Naive thymus-derived CD4-positive, alpha-beta T cell (primary cell): ENCODE measurements at regions of chr4 and their contacts with region 1.

Region 1: GRCh38 chr4:152454398-152455011 is 81.4 kb downstream of the FBXW7 start:
- DNase-seq: peak in 2 of 9 donors; percentile 6 to 7
- ATAC-seq: no peak
- H3K4me3 ChIP-seq: no peak overlapping the region
- H3K4me3 Mint-ChIP-seq: no peak overlapping the region
- H3K27ac ChIP-seq: no peak overlapping the region
- H3K27ac Mint-ChIP-seq: no peak overlapping the region
- H3K4me1 ChIP-seq: peaks cover 5 to 9% of the 10 kb centered on the region in 2 donors
- H3K4me1 Mint-ChIP-seq: peaks cover 30 to 53% (median 41%) of the 10 kb centered on the region in 7 donors
- H3K27me3 ChIP-seq: no peaks in the 10 kb centered on the region
- H3K27me3 Mint-ChIP-seq: no peaks in the 10 kb centered on the region

Region 2: DNA sequence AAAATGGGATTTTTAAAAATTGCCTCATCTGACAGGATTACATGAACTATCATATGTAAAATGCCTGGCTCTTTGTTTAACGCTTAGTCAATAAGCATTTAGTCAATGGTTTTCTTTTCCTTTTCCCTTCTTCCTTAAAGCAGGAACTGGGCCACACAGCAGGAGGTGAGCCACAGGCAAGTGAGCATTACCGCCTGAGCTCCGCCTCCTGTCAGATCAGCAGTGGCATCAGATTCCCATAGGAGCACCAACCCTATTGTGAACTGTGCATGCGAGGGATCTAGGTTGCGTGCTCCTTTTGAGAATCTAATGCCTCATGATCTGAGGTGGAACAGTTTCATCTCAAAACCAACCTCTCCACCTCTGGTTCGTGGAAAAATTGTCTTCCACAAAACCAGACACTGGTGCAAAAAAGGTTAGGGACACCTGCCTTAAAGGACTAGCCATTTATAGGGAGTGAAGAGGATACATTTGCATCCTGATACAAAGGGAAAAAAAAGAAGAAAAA is 224.7 kb before region 1 on chr4:
- CTCF ChIA-PET with region 1: no interaction called
- POLR2A ChIA-PET with region 1: no interaction called
- intact Hi-C with region 1: no loop called
- DNase-seq: no peak
- ATAC-seq: no peak
- H3K4me3 ChIP-seq: no peak overlapping the region
- H3K4me3 Mint-ChIP-seq: no peak overlapping the region
- H3K27ac ChIP-seq: no peak overlapping the region
- H3K27ac Mint-ChIP-seq: no peak overlapping the region
- H3K4me1 ChIP-seq: no peaks in the 10 kb centered on the region
- H3K4me1 Mint-ChIP-seq: peaks cover 0 to 12% (median 9%) of the 10 kb centered on the region in 7 donors
- H3K27me3 ChIP-seq: no peaks in the 10 kb centered on the region
- H3K27me3 Mint-ChIP-seq: no peaks in the 10 kb centered on the region

Region 3: DNA sequence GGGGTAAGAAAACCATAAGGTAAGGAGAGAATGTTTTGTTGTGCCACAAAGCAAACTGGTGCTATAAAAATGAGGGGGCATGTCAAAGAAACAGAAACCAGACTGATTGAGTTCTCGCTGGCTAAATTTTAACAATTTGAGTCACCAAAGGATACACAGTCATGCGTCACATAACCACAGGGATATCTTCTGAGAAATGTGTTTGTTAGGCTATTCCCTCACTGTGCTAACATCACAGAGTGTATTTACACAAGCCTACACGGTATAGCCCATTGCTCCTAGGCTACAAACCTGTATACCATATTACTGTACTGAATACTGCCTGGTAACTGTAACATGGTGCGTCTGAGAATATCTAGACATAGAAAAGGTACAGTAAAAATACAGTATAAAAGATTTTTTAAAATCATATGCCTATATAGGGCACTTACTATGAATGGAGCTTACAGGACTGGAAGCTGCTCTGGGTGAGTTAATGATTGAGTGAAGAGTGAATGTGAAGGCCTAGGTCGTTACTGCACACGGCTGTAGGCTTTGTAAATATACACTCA is 31.3 kb after region 1 on chr4:
- CTCF ChIA-PET with region 1: interaction called, 5 read pairs
- POLR2A ChIA-PET with region 1: no interaction called
- intact Hi-C with region 1: loop called (anchors 1 to 5 kb)
- DNase-seq: peak in 7 of 9 donors; percentile 10 to 49 (median 35)
- ATAC-seq: peak; percentile 97
- H3K4me3 ChIP-seq: no peak overlapping the region
- H3K4me3 Mint-ChIP-seq: peak overlapping the region in 2 of 10 donors; percentile 10 to 74
- H3K27ac ChIP-seq: no peak overlapping the region
- H3K27ac Mint-ChIP-seq: peak overlapping the region in 3 of 9 donors; percentile 30 to 79 (median 40)
- H3K4me1 ChIP-seq: peaks cover 0 to 13% of the 10 kb centered on the region in 2 donors
- H3K4me1 Mint-ChIP-seq: peaks cover 30 to 56% (median 45%) of the 10 kb centered on the region in 7 donors
- H3K27me3 ChIP-seq: no peaks in the 10 kb centered on the region
- H3K27me3 Mint-ChIP-seq: no peaks in the 10 kb centered on the region

Region 4: GRCh38 chr4:152494020-152494419 is 39.5 kb after region 1 on chr4:
- CTCF ChIA-PET with region 1: no interaction called
- POLR2A ChIA-PET with region 1: no interaction called
- intact Hi-C with region 1: loop called in 1 of 2 experiments (anchors 5 kb)
- DNase-seq: no peak
- ATAC-seq: no peak
- H3K4me3 ChIP-seq: no peak overlapping the region
- H3K4me3 Mint-ChIP-seq: no peak overlapping the region
- H3K27ac ChIP-seq: no peak overlapping the region
- H3K27ac Mint-ChIP-seq: peak overlapping the region in 1 of 9 donors; percentile 4
- H3K4me1 ChIP-seq: no peaks in the 10 kb centered on the region
- H3K4me1 Mint-ChIP-seq: peaks cover 42 to 73% (median 56%) of the 10 kb centered on the region in 7 donors
- H3K27me3 ChIP-seq: no peaks in the 10 kb centered on the region
- H3K27me3 Mint-ChIP-seq: no peaks in the 10 kb centered on the region

Region 5: GRCh38 chr4:152735396-152735859 is 280.9 kb after region 1 on chr4:
- CTCF ChIA-PET with region 1: interaction called, 7 read pairs
- POLR2A ChIA-PET with region 1: no interaction called
- intact Hi-C with region 1: loop called in 1 of 2 experiments (anchors 1 kb)
- DNase-seq: peak in 6 of 9 donors; percentile 2 to 33 (median 26)
- ATAC-seq: peak; percentile 49
- H3K4me3 ChIP-seq: no peak overlapping the region
- H3K4me3 Mint-ChIP-seq: no peak overlapping the region
- H3K27ac ChIP-seq: no peak overlapping the region
- H3K27ac Mint-ChIP-seq: no peak overlapping the region
- H3K4me1 ChIP-seq: no peaks in the 10 kb centered on the region
- H3K4me1 Mint-ChIP-seq: peaks cover 0 to 7% (median 0%) of the 10 kb centered on the region in 7 donors
- H3K27me3 ChIP-seq: no peaks in the 10 kb centered on the region
- H3K27me3 Mint-ChIP-seq: peaks cover 0 to 6% (median 4%) of the 10 kb centered on the region in 5 donors